Activated CD4-positive, alpha-beta memory T cell treated with anti-CD3 and anti-CD28 coated beads, Interleukin-2, amount 10 ng/mL, durations not matched to agents 7 days and 5 days (primary cell): ENCODE measurements at regions of chr11 and their contacts with region 1.

Region 1: DNA sequence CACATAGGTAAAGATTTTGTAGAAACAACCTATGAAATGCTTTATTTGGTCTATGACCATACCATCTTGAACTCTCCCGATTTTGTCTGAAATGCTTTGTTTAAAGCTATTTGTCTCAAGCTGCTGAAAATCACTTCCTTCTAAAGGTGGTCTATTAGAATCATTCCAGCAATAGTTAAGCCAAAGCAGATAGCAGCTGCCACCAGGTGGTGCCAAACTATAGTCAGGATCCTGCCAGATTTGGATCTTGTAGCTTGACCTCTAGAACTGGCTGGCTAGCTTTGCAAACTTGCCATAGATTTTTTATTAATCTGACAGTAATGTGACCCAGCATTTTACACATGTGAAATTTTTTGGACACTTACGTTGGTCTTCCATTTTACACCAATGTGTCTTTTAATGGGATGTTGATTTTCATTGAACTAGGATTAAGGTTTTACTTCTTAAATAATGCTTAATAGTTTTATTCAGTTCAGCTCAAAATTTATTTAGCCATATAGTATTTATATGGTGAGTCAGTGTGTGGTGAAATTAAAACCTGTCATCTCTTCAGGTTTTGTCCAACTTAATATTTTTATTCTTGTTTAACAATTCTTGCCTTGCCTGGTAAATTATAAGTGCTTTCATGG is 19.7 kb downstream of the CTR9 start:
- DNase-seq: no peak
- H3K4me3 Mint-ChIP-seq: no peak overlapping the region
- H3K27ac Mint-ChIP-seq: no peak overlapping the region
- H3K4me1 Mint-ChIP-seq: no peaks in the 10 kb centered on the region
- H3K27me3 Mint-ChIP-seq: no peaks in the 10 kb centered on the region

Region 2: DNA sequence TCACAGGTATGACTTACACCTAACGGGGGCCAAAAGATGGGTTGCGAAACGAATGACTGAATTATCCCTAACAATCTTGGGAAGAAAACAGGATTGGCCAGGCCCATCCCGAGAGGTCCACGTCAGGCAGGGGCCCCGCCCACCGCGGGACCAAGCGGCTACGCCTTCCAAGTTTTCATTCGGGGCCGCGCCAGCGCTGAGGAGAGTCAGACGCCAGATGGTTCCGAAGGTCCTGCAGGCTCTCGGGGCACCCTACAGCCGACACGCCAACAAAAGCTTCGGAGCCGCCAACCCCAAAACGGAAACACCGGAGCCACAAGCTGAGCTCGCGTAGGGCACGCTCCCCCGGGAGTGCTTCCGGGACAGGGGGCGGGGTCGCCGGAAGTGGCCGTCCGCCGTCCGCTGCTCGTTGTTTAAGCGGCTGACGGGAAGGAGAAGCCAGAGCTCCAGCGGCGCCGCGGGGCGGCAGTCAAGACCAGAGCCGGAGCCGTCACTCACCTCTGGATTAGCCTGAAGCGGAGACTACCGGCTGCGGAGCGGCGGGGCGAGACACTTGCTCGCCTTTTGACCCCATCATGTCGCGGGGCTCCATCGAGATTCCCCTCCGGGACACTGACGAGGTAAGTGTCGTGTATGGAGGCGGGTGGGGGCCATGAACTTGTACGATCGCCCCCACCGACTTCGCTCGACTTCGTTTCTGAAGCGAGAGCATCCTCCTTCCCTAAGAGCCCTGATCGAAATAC is 19.7 kb before region 1 on chr11 and contains the start of gene CTR9:
- CTCF ChIA-PET with region 1: interaction called, 11 read pairs
- POLR2A ChIA-PET with region 1: no interaction called
- DNase-seq: peak; percentile 94
- H3K4me3 Mint-ChIP-seq: peak within 1 kb of the TSS; percentile 91
- H3K27ac Mint-ChIP-seq: peak within 1 kb of the TSS; percentile 88
- H3K4me1 Mint-ChIP-seq: peaks cover 32% of the 10 kb centered on the region
- H3K27me3 Mint-ChIP-seq: no peaks in the 10 kb centered on the region
- total RNA-seq, gene CTR9: 48.4 to 54.5 TPM

Region 3: GRCh38 chr11:10758957-10759356 is 11.8 kb before region 1 on chr11:
- CTCF ChIA-PET with region 1: interaction called, 10 read pairs
- POLR2A ChIA-PET with region 1: no interaction called
- DNase-seq: no peak
- H3K4me3 Mint-ChIP-seq: no peak overlapping the region
- H3K27ac Mint-ChIP-seq: no peak overlapping the region
- H3K4me1 Mint-ChIP-seq: peaks cover 10% of the 10 kb centered on the region
- H3K27me3 Mint-ChIP-seq: no peaks in the 10 kb centered on the region

Region 4: GRCh38 chr11:10784232-10785145 is 13.7 kb after region 1 on chr11:
- CTCF ChIA-PET with region 1: interaction called, 11 read pairs
- POLR2A ChIA-PET with region 1: no interaction called
- DNase-seq: no peak
- H3K4me3 Mint-ChIP-seq: no peak overlapping the region
- H3K27ac Mint-ChIP-seq: no peak overlapping the region
- H3K4me1 Mint-ChIP-seq: no peaks in the 10 kb centered on the region
- H3K27me3 Mint-ChIP-seq: no peaks in the 10 kb centered on the region